ENCODE measurements at regions of chr2 and their contacts with region 1.

Region 1: DNA sequence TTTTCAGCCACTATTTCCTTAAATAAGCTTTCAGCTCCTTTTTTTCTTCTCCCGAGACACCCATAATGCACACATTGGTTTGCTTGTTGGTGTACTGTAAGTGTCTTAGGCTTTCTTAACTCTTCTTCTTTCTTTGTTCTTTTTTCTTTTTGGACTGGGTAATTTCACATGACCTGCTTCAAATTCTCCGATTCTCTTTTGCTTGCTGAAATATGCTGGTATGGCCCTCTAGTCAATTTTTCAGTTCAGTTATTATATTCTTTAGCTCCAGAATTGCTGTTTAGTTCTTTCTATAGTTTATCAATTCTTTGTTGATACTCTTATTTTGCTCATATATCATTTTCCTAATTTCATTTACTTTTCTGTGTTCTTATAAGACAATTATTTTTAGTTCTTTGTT is 15.3 kb downstream of the FASTKD2 start:
- DNase-seq: no peak
- ATAC-seq: no peak
- H3K4me3 ChIP-seq: no peak overlapping the region
- H3K4me1 ChIP-seq: no peaks in the 10 kb centered on the region
- CTCF ChIP-seq: no peak

Region 2: DNA sequence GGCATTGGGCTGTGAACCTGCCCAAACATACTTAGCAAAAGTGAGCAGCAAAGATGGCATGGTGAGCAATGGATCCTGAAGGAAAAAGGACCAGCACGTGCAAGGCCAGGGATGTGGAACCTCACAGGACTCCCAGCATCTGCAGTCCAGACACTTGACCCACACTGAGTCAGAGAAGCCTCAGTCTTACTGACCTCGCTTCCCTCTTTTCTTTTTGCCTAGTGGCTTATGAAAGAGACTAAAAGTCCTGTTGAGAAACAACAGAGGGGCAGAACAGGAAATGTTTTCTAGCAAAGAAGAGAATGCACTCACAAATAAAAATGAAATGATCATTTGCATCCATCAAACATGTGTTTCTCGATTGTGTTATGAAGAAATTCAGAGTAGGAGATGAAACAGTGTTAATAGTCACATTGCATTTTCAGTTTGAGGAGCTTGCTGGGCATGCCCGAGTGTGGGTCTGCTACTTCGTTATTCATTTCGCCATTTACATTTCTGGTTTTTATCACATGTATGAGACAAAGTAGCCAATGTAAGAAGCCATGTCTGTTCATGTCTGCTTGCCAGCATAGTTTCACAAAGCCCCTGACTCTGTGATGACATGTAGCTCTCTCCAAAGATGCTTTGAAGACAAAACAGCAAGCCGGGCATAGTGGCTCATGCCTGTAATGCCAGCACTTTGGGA is 813.1 kb before region 1 on chr2:
- intact Hi-C with region 1: no loop called
- DNase-seq: no peak
- ATAC-seq: no peak
- H3K4me3 ChIP-seq: no peak overlapping the region
- H3K4me1 ChIP-seq: peaks cover 4% of the 10 kb centered on the region
- CTCF ChIP-seq: no peak

Region 3: DNA sequence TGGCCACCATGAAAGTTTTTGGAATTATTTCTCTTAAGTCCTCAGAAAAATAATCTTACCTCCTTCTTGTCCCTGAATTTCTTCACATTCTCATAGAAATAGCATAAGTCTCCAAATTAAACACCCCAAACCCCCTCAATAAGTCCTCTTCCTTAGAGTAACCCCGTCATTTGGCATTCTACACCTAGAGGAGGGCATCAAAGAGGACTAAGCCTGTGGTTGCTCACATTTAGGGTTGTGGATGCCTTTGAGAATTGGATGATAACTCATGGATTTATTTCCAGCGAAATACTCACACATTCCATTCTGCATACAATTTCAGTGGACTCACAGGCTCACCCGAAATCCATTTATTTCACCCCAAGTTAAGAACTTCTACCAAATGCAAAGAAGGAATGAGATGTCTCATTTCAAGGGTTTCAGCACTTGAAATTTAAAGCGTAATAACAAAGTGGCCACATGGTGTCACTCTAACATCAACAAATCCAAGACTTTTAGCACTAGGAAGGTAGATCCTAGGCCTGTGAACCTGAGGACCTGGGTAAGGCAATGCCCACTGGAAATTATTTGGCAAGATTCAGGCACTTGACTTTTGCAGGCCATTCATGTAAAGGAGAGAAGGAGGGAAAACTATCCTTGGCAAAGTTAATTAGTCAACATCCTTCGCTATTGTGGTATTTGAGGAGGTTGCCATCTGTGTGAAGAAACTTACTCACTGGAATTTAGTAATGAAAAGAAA is 87.1 kb before region 1 on chr2:
- intact Hi-C with region 1: loop called in 1 of 2 experiments (anchors 2 kb)
- DNase-seq: peak in 1 of 3 donors; percentile 74
- ATAC-seq: peak; percentile 68
- H3K4me3 ChIP-seq: no peak overlapping the region
- H3K4me1 ChIP-seq: no peaks in the 10 kb centered on the region
- CTCF ChIP-seq: peak; percentile 30

Region 4: DNA sequence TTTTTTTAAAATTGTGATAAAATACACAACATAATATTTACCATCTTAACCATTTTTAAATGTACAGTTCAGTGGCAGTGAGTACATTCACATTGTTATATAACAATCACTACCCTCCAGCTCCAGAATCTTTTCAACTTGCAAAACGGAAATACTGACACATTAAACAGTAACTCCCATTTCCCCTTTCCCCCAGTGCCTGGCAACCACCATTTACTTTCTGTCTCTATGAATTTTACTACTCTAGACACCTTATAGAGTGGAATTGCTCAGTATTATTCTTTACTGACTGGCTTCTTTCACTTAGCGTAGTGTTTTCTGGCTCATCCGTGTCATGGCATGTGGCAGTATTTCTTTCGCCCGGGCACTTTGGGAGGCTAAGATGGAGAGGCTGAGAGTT is 17.3 kb after region 1 on chr2:
- intact Hi-C with region 1: no loop called
- DNase-seq: no peak
- ATAC-seq: no peak
- H3K4me3 ChIP-seq: no peak overlapping the region
- H3K4me1 ChIP-seq: no peaks in the 10 kb centered on the region
- CTCF ChIP-seq: no peak

Region 5: DNA sequence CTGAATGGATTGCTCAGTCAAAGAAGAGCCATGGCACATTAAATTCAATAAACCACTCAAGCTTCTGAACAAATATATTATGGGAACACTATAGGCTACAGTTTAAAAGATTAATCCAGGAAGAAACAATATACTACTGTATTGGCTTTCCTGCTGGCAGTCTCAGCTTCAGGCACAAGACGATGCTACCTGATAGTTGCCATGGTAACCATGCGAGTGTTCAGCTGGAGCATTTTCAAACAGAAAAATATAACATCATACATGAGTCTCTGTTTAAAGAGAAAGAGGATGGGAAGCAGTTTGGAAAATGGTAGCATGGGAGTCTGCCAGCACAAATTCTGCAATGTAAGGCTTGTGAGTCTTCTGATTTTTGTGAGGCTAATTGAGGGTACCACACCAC is 92.8 kb after region 1 on chr2:
- intact Hi-C with region 1: no loop called
- DNase-seq: no peak
- ATAC-seq: no peak
- H3K4me3 ChIP-seq: no peak overlapping the region
- H3K4me1 ChIP-seq: no peaks in the 10 kb centered on the region
- CTCF ChIP-seq: no peak

Region 6: DNA sequence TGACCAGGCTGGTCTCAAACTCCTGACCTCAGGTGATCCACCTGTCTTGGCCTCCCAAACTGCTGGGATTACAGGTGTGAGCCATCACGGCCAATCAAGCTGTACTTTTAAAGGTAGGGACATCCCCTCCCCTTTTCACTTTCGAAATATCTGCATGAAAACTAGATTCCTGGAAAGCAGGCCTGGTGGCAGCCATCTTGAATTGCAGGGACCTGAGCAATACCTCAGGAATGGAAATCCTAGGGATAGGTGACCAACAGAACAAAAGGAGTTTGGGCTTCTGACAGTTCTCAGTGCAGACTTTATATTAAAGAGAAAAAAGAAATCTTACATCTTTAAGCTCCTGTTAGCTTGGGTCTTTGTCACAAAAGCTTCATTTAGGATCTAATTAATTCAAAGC is 322.5 kb after region 1 on chr2:
- intact Hi-C with region 1: no loop called
- DNase-seq: no peak
- ATAC-seq: no peak
- H3K4me3 ChIP-seq: no peak overlapping the region
- H3K4me1 ChIP-seq: no peaks in the 10 kb centered on the region
- CTCF ChIP-seq: no peak

Measured in mucosa of descending colon (tissue), 3 donors.